ENCODE measurements at regions of chr11 and their contacts with region 1.

Region 1: GRCh38 chr11:31369348-31370329 is at the starts of genes DCDC1 and DNAJC24:
- DNase-seq: peak; percentile 90
- H3K4me3 ChIP-seq: peak within 1 kb of the TSS; percentile 93
- H3K27ac ChIP-seq: 0 out of 2 replicates have a peak within 1 kb of the TSS, but pooled peaks have one; percentile 22
- H3K4me1 ChIP-seq: peaks cover 16% of the 10 kb centered on the region
- H3K27me3 ChIP-seq: no peaks in the 10 kb centered on the region
- CTCF ChIP-seq: no peak
- total RNA-seq, gene DCDC1: 1.5 and 2.2 TPM in 2 replicates
- total RNA-seq, gene DNAJC24: 18.2 and 24.0 TPM in 2 replicates

Region 2: DNA sequence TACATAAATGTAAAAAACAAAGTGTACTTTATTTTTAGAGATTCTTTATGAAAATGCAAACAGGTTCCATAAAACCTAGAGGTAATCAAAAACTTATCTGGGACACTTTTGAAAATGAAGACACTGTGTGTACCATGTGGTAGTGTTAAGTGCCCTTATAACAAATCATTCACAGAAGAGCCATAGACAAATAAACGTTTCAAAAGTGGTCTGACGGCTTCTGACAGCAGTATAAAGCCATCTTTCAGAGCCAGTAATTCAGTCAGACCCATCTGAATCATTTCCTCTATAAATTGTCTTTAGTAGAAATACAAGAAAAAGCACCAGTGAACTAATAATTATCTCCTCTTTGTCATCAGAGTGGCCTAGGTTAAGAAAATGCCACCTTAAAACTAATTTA is 341.5 kb after region 1 on chr11:
- CTCF ChIA-PET with region 1: no interaction called
- POLR2A ChIA-PET with region 1: no interaction called
- intact Hi-C with region 1: no loop called
- DNase-seq: no peak
- H3K4me3 ChIP-seq: no peak overlapping the region
- H3K27ac ChIP-seq: no peak overlapping the region
- H3K4me1 ChIP-seq: no peaks in the 10 kb centered on the region
- H3K27me3 ChIP-seq: no peaks in the 10 kb centered on the region
- CTCF ChIP-seq: no peak

Region 3: DNA sequence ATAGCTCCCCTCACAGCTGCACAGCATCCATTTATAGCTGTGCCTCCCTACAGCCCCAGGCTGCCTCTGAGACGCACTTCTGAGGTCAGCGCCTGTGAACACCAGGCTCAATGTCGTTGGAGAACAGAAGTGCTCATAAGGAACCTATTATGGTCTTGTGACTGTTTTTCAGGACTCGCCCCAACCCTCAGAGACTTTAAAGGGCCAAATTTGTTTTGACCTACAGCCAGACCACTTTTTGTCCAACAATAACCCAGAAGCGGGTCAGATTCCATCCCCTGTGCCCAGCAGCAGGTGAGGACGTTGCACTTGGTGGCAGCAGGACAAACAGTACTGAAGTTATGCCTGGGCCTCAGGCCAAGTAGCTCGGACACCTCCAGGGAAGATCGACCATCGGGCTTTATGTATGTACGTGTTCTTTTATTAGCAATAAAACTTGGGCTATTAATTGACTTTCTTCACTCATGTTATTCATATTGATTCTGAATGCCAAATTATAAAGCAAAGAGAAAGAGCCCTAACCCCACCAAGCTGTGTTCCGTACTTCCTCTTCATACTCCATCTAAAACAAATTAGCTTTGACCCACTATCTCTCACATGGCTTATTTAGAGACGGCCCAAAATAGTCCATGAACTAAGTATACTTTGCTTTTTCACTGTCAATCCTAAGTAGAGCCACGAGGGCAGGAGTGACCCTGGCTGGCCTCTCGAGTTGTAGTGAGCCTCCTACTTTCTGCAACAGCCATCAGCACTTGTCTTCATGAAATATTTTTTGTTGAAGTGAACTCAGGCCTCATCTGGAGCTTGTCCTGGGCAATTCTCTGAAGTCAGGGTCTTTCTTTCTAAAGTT is 533.8 kb after region 1 on chr11:
- CTCF ChIA-PET with region 1: no interaction called
- POLR2A ChIA-PET with region 1: interaction called, 12 read pairs
- intact Hi-C with region 1: no loop called
- DNase-seq: no peak
- H3K4me3 ChIP-seq: no peak overlapping the region
- H3K27ac ChIP-seq: no peak overlapping the region
- H3K4me1 ChIP-seq: no peaks in the 10 kb centered on the region
- H3K27me3 ChIP-seq: no peaks in the 10 kb centered on the region
- CTCF ChIP-seq: no peak